Sciatic nerve (tissue), 2 donors: ENCODE measurements at regions of chr19 and their contacts with region 1.

Region 1: GRCh38 chr19:40662921-40663694 is 27.3 kb downstream of the NUMBL start:
- DNase-seq: peak; percentile 97
- ATAC-seq: peak; percentile 86

Region 2: DNA sequence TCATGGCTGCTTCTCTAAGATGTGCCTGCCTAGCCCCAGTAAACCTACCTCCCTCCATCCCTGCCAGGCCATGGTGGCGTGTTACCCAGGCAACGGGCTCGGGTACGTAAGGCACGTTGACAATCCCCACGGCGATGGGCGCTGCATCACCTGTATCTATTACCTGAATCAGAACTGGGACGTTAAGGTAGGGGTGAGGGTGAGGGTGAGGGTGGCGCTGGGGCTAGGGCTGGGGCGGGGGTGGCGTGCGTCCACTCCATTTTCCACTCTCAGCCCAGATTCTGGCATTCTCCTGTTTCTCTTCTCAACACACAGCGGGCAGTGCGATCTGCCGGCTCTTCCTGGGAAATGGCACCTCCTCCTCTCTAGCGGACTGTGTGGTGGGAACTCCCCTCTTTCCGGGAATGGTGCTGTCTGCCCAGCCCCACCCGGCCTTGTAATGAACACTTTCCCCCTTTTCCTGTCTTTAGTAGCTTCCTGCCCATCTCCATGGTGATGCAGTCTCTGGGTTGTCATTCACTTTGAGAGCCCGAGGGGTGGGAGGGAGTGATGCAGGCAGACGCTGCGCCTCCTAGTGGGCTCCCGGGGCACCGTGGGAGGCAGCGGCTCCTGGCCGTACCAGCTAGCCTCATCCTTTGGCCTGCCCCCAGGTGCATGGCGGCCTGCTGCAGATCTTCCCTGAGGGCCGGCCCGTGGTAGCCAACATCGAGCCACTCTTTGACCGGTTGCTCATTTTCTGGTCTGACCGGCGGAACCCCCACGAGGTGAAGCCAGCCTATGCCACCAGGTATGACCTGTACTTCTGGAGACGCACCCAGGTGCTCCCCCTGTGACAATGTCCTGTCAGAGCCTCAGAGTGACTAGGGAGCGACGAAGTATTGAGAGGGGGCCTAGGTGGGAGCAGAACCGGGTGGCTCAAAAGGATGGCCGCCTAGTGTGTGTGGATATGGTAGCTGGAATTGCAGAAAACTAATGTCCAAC is 143.7 kb after region 1 on chr19:
- intact Hi-C with region 1: loop called (anchors 10 kb)
- DNase-seq: peak; percentile 87
- ATAC-seq: peak; percentile 68

Region 3: GRCh38 chr19:41711376-41712261 is 1048.5 kb after region 1 on chr19:
- intact Hi-C with region 1: no loop called
- DNase-seq: peak; percentile 15
- ATAC-seq: no peak